ENCODE measurements at regions of chr6 and their contacts with region 1.

Region 1: DNA sequence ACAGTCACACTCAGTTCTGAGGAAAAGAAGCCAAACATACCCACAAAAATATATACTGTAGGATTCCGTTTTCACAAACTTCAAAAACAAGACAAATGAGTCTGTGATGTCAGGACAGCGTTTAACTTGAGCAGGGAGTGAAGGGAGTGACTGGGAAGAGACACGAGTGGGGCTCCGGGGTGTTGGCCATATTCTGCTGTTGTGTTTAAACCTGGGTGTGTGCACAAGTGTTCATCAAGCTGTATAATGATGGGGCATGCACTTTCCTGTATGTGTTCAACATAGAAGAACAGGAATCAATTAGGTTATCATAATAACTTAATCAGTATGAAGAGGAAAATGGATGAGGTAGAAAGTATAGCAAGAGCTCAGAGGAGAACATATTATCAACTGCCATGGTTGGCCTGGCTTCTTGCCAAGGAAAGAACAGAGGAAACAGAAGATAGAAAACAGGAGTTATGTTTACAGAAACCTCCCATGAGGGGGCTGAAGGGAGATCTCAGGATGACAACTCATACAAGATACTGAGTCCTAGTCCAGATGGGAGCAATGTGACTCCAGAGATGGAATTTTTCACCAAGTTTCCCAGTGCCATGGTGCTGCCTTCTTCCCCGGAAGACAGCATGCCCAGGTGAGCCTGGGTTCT is 15.1 kb upstream of the AFDN start:
- DNase-seq: no peak
- H3K4me3 ChIP-seq: no peak overlapping the region
- H3K27ac ChIP-seq: no peak overlapping the region
- H3K4me1 ChIP-seq: no peaks in the 10 kb centered on the region
- H3K27me3 ChIP-seq: no peaks in the 10 kb centered on the region
- CTCF ChIP-seq: no peak

Region 2: GRCh38 chr6:167588181-167588919 is 223.2 kb before region 1 on chr6:
- intact Hi-C with region 1: no loop called
- DNase-seq: no peak
- H3K4me3 ChIP-seq: no peak overlapping the region
- H3K27ac ChIP-seq: peak overlapping the region in 1 of 2 donors; percentile 27
- H3K4me1 ChIP-seq: peaks cover 0 to 3% of the 10 kb centered on the region in 2 donors
- H3K27me3 ChIP-seq: no peaks in the 10 kb centered on the region
- CTCF ChIP-seq: peak in 1 of 3 experiments; percentile 19

Region 3: DNA sequence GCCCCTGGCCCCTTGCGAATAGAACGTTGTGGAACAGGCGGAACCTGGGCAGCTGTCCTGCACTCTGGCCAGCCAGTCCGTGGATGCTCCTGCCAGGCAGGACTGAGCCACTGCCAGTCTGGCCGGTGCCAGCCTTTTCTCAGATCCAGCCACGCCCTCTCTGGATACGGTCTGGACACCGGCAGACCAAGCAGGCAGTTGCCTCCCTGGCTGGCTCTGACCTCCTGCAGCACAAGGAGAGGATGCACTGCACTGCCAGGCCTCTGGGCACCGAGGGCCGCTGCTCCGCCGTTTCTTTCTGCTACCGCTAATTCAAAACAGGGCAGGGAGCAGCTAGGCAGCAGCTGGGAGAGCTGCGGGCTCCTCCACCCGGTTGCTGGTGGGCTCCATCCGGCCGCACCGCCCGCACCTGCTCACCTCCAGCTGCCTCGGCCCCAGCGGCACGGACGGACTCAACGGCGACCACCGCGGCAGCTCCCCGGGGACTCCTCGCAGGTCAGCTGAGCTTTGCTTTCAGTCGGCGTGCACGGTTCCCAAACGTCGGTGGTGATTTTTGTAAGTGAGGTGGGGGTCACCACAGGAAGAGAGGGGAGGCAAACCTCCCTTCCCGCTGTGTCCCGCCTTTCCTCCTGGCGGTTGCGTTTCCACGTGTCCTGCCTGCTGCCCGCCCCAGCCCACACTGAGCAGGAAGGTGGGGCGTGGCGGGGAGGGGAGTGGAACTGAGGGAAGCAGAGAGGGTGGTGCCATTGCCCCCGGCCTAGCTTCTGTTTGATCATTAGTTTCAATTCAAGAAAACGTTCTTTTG is 15.2 kb before region 1 on chr6:
- intact Hi-C with region 1: no loop called
- DNase-seq: no peak
- H3K4me3 ChIP-seq: peak overlapping the region; percentile 50 to 51
- H3K27ac ChIP-seq: no peak overlapping the region
- H3K4me1 ChIP-seq: peaks cover 0 to 6% of the 10 kb centered on the region in 2 donors
- H3K27me3 ChIP-seq: no peaks in the 10 kb centered on the region
- CTCF ChIP-seq: no peak

Region 4: GRCh38 chr6:167851370-167851952 is 39.9 kb after region 1 on chr6:
- intact Hi-C with region 1: loop called (anchors 1 kb)
- DNase-seq: no peak
- H3K4me3 ChIP-seq: no peak overlapping the region
- H3K27ac ChIP-seq: no peak overlapping the region
- H3K4me1 ChIP-seq: no peaks in the 10 kb centered on the region
- H3K27me3 ChIP-seq: no peaks in the 10 kb centered on the region
- CTCF ChIP-seq: no peak

Measured in ascending aorta (tissue), 2 donors.